WTC11 (cell line): ENCODE measurements at regions of chr3 and their contacts with region 1.

Region 1: DNA sequence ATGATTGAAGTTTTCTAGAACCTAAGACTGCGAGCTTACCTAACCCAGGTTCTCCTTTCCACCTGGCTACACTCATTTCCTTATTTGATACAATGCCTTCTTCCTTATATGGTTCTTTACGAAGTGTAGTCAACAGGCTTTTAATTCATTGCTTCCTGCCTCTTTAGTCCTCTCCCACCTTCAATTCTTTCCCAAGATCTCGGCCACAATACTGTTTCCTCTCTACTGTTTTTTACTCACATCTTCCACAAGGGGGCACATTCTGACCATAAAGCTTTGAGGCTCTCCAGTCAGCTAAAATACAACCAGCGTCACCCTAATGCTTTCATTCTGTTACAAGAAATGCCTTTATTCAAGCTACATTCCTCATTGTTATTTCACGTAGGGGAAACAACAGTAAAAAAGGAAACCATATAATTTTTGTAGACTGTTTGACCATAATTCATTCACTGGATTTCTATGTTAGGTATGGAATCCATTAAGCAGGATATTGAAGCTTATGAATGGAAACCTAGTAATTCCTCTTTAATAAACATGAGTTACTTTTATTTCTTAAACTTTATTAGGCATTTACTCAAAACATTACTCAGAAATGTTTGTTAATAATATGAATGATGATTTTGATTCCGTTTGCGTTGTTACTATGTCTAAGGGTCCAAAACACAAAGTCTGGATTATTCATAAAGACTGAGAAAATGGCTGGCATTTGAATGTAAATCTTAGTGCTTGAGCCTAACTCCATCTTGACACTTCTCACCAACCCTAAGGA is 29.5 kb upstream of the VEPH1 start:
- DNase-seq: no peak
- ATAC-seq: peak; percentile 94
- H3K4me3 Mint-ChIP-seq: no peak overlapping the region
- H3K27ac Mint-ChIP-seq: no peak overlapping the region
- H3K4me1 Mint-ChIP-seq: no peaks in the 10 kb centered on the region
- H3K27me3 Mint-ChIP-seq: no peaks in the 10 kb centered on the region
- CTCF ChIP-seq: peak; percentile 56

Region 2: GRCh38 chr3:157354722-157355121 is 178.0 kb before region 1 on chr3:
- CTCF ChIA-PET with region 1: no interaction called
- POLR2A ChIA-PET with region 1: no interaction called
- DNase-seq: peak; percentile 37
- ATAC-seq: peak; percentile 94
- H3K4me3 Mint-ChIP-seq: no peak overlapping the region
- H3K27ac Mint-ChIP-seq: no peak overlapping the region
- H3K4me1 Mint-ChIP-seq: peaks cover 5% of the 10 kb centered on the region
- H3K27me3 Mint-ChIP-seq: no peaks in the 10 kb centered on the region
- CTCF ChIP-seq: peak; percentile 72

Region 3: DNA sequence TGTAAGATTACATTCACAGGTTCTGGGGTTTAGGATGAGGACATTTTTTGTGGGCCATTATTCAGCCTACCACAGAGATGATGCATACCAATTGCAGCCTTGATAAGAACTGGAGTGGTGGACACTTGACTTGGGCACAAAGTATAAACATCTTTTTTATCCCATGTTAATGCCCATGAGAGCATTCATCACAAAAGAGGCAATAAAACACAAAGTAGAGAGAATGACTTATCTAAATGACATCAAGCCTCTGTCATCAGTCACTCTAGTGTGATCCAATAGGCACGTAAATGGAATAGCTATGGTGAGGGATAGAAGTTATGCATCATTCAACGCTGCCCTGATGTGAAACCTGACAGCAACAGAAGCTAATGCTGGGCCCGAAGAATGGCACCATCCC is 55.3 kb before region 1 on chr3:
- CTCF ChIA-PET with region 1: no interaction called
- POLR2A ChIA-PET with region 1: no interaction called
- DNase-seq: no peak
- ATAC-seq: no peak
- H3K4me3 Mint-ChIP-seq: no peak overlapping the region
- H3K27ac Mint-ChIP-seq: no peak overlapping the region
- H3K4me1 Mint-ChIP-seq: peaks cover 10% of the 10 kb centered on the region
- H3K27me3 Mint-ChIP-seq: no peaks in the 10 kb centered on the region
- CTCF ChIP-seq: no peak

Region 4: GRCh38 chr3:157499342-157499963 is 33.3 kb before region 1 on chr3:
- CTCF ChIA-PET with region 1: interaction called, 23 read pairs
- POLR2A ChIA-PET with region 1: no interaction called
- DNase-seq: peak; percentile 91
- ATAC-seq: peak; percentile 90
- H3K4me3 Mint-ChIP-seq: peak overlapping the region; percentile 78
- H3K27ac Mint-ChIP-seq: peak overlapping the region; percentile 98
- H3K4me1 Mint-ChIP-seq: peaks cover 64% of the 10 kb centered on the region
- H3K27me3 Mint-ChIP-seq: no peaks in the 10 kb centered on the region; the same call in 1 of the 2 replicates
- CTCF ChIP-seq: no peak

Region 5: GRCh38 chr3:157542711-157543500 is 10.2 kb after region 1 on chr3:
- CTCF ChIA-PET with region 1: interaction called, 57 read pairs
- POLR2A ChIA-PET with region 1: interaction called, 6 read pairs
- DNase-seq: peak; percentile 72
- ATAC-seq: peak; percentile 92
- H3K4me3 Mint-ChIP-seq: peak overlapping the region; percentile 78
- H3K27ac Mint-ChIP-seq: no peak overlapping the region
- H3K4me1 Mint-ChIP-seq: 0 out of 2 replicates have a peak, but pooled peaks cover 3% of the 10 kb centered on the region
- H3K27me3 Mint-ChIP-seq: peaks cover 24% of the 10 kb centered on the region
- CTCF ChIP-seq: 0 out of 2 replicates have a peak, but pooled peaks have one; percentile 23

Region 6: DNA sequence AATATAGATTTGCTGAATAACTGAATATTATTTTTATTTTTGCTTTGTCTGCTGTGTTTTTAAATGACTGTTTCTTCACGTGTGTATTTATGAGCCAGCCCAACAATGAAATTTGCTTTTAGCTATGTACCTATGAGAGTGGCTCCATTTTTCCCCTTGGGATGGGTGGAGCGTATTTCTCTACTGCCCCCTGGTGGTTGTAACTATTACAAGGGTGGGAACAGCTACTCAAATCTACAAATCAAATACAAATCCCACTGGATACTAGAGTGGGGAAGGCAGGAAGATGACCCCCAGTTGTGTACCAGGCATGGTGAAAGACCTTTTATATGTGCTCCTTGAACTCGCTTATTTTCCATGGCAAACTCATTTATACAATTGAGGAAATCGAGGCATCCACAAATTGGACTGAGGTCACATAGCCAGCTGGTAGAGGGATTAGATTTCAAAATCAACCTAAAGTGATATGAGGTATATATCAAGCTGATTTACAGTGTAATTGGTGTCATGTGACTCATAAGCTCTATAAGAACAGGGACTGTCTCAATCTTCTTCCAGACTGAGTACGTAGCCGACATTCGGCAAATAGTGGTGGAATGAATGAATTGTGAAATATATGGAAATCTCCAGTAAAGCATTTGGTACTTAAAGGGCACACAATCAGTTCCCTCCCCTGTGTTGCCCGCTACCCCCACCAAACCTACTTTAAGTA is 40.0 kb after region 1 on chr3:
- CTCF ChIA-PET with region 1: interaction called, 132 read pairs
- POLR2A ChIA-PET with region 1: no interaction called
- DNase-seq: peak; percentile 42
- ATAC-seq: peak; percentile 97
- H3K4me3 Mint-ChIP-seq: no peak overlapping the region
- H3K27ac Mint-ChIP-seq: no peak overlapping the region
- H3K4me1 Mint-ChIP-seq: no peaks in the 10 kb centered on the region
- H3K27me3 Mint-ChIP-seq: no peaks in the 10 kb centered on the region
- CTCF ChIP-seq: peak; percentile 84

Region 7: GRCh38 chr3:157594413-157594812 is 61.7 kb after region 1 on chr3:
- CTCF ChIA-PET with region 1: interaction called, 21 read pairs
- POLR2A ChIA-PET with region 1: interaction called, 3 read pairs
- DNase-seq: peak; percentile 16
- ATAC-seq: peak; percentile 89
- H3K4me3 Mint-ChIP-seq: no peak overlapping the region
- H3K27ac Mint-ChIP-seq: no peak overlapping the region
- H3K4me1 Mint-ChIP-seq: peaks cover 4% of the 10 kb centered on the region
- H3K27me3 Mint-ChIP-seq: no peaks in the 10 kb centered on the region
- CTCF ChIP-seq: no peak